ENCODE measurements at regions of chr9 and their contacts with region 1.

Region 1: DNA sequence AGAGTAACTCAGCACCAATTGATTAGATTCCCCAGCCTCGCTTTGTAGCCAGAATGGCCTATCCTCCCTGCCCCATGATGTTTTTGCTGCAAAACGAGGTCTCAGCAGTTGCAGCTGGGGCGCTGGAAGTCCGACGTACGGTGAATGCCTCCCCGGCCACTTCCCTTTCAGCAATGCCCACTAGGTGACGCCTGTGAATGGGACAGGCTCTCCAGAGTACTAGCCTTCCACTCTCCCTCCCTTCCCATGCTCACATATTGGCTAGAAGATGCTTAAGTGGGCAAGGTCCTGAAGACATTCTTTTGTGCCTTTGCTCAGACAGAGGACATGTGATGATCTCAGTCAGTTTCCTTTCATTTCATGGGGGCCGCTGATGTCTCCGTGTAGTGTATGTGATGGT is 50.8 kb downstream of the DMRT2 start:
- DNase-seq: peak; percentile 59
- H3K4me3 Mint-ChIP-seq: no peak overlapping the region
- H3K27ac Mint-ChIP-seq: no peak overlapping the region
- H3K4me1 Mint-ChIP-seq: peaks cover 6% of the 10 kb centered on the region
- H3K27me3 Mint-ChIP-seq: peaks cover 11% of the 10 kb centered on the region
- CTCF ChIP-seq: peak; percentile 72

Region 2: DNA sequence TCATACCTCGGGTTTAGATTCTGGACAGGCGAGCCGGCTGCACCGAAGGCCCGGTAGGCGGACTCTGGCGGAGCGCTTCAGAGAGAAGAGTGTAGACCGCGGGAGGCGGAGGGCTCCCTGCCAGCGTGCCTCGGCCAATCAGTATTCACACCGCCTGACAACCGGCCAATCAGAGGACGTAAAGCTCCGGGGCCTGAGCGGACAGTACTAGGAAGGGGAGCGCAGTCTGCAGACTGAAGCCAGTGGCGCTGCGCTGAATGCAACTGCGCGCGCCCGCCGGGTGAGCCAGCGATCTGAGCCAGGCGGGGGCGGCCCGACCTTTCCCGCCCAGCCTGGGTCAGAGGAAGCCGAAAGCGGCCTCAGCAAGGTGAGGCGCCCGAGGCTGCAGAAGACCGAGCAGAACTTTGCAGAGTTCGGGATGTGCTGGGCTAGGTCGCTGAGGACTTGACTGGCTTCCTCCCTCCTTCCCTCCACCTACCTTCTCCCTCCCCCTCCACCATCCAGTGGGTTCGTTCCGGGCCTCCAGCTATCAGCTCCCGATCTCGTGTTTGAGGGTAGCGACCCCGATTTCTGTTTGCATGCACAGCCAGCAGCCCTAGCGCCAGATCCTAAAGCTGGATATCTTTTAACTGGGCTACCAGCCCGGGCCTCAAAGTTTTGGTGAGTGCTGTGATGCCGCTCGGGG is 50.7 kb before region 1 on chr9 and contains the start of gene DMRT2:
- CTCF ChIA-PET with region 1: no interaction called
- POLR2A ChIA-PET with region 1: no interaction called
- intact Hi-C with region 1: no loop called
- DNase-seq: peak; percentile 77
- H3K4me3 Mint-ChIP-seq: peak within 1 kb of the TSS; percentile 48
- H3K27ac Mint-ChIP-seq: no peak within 1 kb of the TSS
- H3K4me1 Mint-ChIP-seq: peaks cover 11% of the 10 kb centered on the region
- H3K27me3 Mint-ChIP-seq: no peaks in the 10 kb centered on the region
- CTCF ChIP-seq: no peak
- total RNA-seq, gene DMRT2: not detected in 2 replicates

Region 3: GRCh38 chr9:1337161-1337560 is 236.2 kb after region 1 on chr9:
- CTCF ChIA-PET with region 1: interaction called, 4 read pairs
- POLR2A ChIA-PET with region 1: no interaction called
- intact Hi-C with region 1: loop called (anchors 1 kb)
- DNase-seq: peak; percentile 79
- H3K4me3 Mint-ChIP-seq: no peak overlapping the region
- H3K27ac Mint-ChIP-seq: no peak overlapping the region
- H3K4me1 Mint-ChIP-seq: no peaks in the 10 kb centered on the region
- H3K27me3 Mint-ChIP-seq: no peaks in the 10 kb centered on the region
- CTCF ChIP-seq: peak; percentile 7

Region 4: GRCh38 chr9:1429297-1429696 is 328.4 kb after region 1 on chr9:
- CTCF ChIA-PET with region 1: interaction called, 6 read pairs
- POLR2A ChIA-PET with region 1: no interaction called
- intact Hi-C with region 1: loop called (anchors 1 kb)
- DNase-seq: peak; percentile 40
- H3K4me3 Mint-ChIP-seq: no peak overlapping the region
- H3K27ac Mint-ChIP-seq: no peak overlapping the region
- H3K4me1 Mint-ChIP-seq: no peaks in the 10 kb centered on the region
- H3K27me3 Mint-ChIP-seq: no peaks in the 10 kb centered on the region
- CTCF ChIP-seq: peak; percentile 54

Region 5: DNA sequence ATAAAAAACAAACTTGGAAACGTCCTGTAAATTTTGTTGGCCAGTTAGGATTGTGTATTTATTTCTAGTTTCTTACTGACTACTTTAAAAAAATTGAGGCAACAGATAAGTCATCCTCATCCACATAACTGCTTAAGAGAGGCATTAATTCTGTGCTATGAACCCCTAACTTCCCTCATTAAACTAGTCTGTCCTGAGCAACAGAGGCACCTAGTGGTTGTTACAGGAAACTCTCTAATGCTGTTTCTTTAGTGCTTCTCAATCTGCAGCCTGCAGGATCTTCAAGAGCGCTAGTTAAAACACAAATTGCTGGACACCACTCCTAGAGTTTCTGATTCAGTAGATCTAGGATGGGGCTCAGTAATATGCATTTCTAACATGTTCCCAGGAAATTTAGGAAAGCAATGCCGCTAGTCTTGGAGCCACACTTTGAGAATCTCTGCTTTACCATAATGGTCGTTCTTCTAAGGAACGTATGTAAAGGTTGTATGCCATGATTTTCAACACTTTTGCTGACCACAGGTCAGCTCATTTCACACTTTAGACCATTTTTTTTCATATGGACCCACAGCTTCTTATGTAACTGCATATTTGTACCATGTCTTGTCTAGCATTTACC is 504.1 kb after region 1 on chr9:
- CTCF ChIA-PET with region 1: interaction called, 4 read pairs
- POLR2A ChIA-PET with region 1: interaction called, 3 read pairs
- intact Hi-C with region 1: loop called (anchors 1 kb)
- DNase-seq: peak; percentile 56
- H3K4me3 Mint-ChIP-seq: no peak overlapping the region
- H3K27ac Mint-ChIP-seq: no peak overlapping the region
- H3K4me1 Mint-ChIP-seq: no peaks in the 10 kb centered on the region
- H3K27me3 Mint-ChIP-seq: peaks cover 12% of the 10 kb centered on the region
- CTCF ChIP-seq: peak; percentile 76